Left cardiac atrium (tissue), 4 donors: ENCODE measurements at regions of chr14 and their contacts with region 1.

Region 1: DNA sequence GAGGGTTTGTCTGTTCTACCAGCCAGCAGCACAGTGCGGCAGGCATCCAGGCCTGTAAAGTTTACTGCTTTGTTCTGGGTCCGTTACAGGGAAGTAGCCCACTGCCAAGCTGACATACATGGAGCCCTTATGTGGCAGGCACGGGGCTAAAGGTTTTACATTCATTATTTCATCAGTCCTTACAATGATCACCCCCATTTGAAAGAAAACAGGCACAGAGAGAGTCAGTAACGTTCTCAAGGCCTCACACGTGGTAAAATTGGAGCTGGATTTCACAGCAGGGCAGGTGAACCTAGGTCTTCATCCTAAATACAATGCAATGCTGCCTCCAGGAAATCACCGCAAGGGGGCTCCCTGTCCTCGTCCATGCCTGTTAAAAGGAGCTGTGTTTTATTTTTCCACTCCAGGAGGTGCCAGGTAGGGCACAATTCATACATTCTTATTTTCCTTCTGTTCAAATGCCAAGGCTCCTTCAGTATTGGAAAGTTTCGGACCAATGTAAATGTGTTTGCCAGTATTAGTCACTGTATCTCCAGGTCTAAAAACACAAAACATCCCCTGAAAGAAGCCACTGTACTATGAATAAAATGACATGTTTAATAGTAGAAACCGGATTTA is 172.2 kb upstream of the GZMB start:
- DNase-seq: peak; percentile 73
- ATAC-seq: peak; percentile 67 to 76

Region 2: DNA sequence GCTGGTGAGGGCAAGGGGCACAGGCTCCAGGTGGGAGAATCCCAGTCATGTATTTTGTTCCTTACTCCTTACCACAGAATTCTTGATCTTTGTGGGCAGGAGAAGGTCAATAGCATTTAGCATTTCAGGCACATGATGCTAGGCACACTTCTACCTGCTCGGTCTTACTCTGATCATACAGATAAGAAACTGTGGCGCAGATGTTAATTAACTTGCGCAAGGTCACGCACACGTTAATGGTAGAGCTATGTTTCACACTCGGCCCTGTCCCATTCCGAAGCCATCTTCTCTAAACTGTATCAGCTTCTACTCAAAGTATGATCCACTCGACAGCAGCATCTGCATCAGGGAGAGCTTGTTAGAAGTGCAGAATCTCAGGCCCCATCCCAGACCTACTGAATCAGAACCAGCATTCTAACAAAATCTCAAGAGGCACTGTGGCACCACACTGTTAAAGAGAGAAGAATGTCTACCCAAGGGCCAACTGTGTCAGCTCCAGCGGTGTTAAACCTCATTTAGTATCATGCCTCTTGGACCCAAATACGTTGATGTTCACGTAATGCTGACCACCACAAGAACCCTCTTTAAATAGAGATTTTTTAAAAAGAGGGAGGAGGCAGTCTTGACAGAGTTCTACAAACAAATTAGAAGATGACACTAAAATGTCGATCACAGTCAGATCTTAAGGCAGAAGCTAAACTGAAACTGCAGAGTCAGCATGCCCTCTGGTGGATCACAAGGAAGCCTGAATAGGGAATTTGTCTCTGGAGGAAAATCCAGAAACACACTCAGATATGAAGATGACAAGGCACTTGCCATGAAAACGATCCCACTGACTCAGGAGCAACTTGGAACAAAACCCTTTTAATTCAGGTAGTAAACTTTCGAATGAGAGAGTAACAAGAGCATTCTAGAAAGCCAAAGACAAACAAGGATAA is 236.5 kb after region 1 on chr14:
- intact Hi-C with region 1: loop called in 1 of 2 experiments (anchors 2 kb)
- DNase-seq: peak; percentile 31
- ATAC-seq: peak; percentile 56 to 80

Region 3: GRCh38 chr14:25132732-25133422 is 326.7 kb after region 1 on chr14:
- intact Hi-C with region 1: loop called in 1 of 2 experiments (anchors 5 kb)
- DNase-seq: peak; percentile 72
- ATAC-seq: peak; percentile 98

Region 4: GRCh38 chr14:25150934-25151790 is 345.0 kb after region 1 on chr14:
- intact Hi-C with region 1: loop called (anchors 5 kb)
- DNase-seq: no peak
- ATAC-seq: peak in 1 of 2 donors; percentile 57